Activated CD4-positive, alpha-beta T cell treated with anti-CD3 and anti-CD28 coated beads, Interleukin-2, amount 10 ng/mL, durations not matched to agents 7 days and 5 days (primary cell): ENCODE measurements at regions of chr16 and their contacts with region 1.

Region 1: DNA sequence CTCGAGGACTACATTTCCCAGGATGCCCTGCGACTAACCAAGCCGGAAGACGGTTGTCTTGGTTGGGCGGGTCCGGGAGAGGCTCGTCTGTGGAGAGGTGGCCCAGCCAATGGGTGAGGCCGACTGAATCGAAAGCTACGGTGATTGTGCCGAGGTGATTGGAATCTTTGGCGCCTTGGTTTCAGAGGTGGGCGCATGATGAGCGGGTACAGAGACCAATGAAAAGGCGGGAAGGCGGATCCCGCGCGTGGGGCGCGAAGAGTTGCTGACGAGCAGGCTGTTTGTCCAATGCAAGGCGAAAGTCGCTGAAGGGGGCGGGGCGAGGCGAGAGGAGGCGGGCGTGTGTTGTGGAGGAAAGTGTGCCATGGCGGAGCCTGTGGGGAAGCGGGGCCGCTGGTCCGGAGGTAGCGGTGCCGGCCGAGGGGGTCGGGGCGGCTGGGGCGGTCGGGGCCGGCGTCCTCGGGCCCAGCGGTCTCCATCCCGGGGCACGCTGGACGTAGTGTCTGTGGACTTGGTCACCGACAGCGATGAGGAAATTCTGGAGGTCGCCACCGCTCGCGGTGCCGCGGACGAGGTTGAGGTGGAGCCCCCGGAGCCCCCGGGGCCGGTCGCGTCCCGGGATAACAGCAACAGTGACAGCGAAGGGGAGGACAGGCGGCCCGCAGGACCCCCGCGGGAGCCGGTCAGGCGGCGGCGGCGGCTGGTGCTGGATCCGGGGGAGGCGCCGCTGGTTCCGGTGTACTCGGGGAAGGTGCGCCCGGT is at the start of gene NFATC2IP:
- DNase-seq: peak; percentile 100
- H3K4me3 Mint-ChIP-seq: peak within 1 kb of the TSS; percentile 100
- H3K27ac Mint-ChIP-seq: peak within 1 kb of the TSS; percentile 99
- H3K4me1 Mint-ChIP-seq: peaks cover 36% of the 10 kb centered on the region
- H3K27me3 Mint-ChIP-seq: peaks cover 3% of the 10 kb centered on the region
- total RNA-seq, gene NFATC2IP: 114 to 130 TPM

Region 2: GRCh38 chr16:28846080-28846932 is 104.5 kb before region 1 on chr16 and contains the start of gene TUFM:
- CTCF ChIA-PET with region 1: interaction called, 12 read pairs
- POLR2A ChIA-PET with region 1: interaction called, 3 read pairs
- DNase-seq: peak; percentile 99
- H3K4me3 Mint-ChIP-seq: peak within 1 kb of the TSS; percentile 90
- H3K27ac Mint-ChIP-seq: peak within 1 kb of the TSS; percentile 93
- H3K4me1 Mint-ChIP-seq: peaks cover 35% of the 10 kb centered on the region
- H3K27me3 Mint-ChIP-seq: no peaks in the 10 kb centered on the region
- total RNA-seq, gene TUFM: 105 to 125 TPM

Region 3: GRCh38 chr16:28863929-28864793 is 86.7 kb before region 1 on chr16:
- CTCF ChIA-PET with region 1: interaction called, 13 read pairs
- POLR2A ChIA-PET with region 1: no interaction called
- DNase-seq: peak; percentile 24
- H3K4me3 Mint-ChIP-seq: peak overlapping the region; percentile 86
- H3K27ac Mint-ChIP-seq: peak overlapping the region; percentile 98
- H3K4me1 Mint-ChIP-seq: peaks cover 33% of the 10 kb centered on the region
- H3K27me3 Mint-ChIP-seq: no peaks in the 10 kb centered on the region

Region 4: GRCh38 chr16:28873536-28874201 is 77.2 kb before region 1 on chr16:
- CTCF ChIA-PET with region 1: interaction called, 13 read pairs
- POLR2A ChIA-PET with region 1: interaction called, 9 read pairs
- DNase-seq: peak; percentile 62
- H3K4me3 Mint-ChIP-seq: no peak overlapping the region
- H3K27ac Mint-ChIP-seq: no peak overlapping the region
- H3K4me1 Mint-ChIP-seq: peaks cover 9% of the 10 kb centered on the region
- H3K27me3 Mint-ChIP-seq: no peaks in the 10 kb centered on the region

Region 5: DNA sequence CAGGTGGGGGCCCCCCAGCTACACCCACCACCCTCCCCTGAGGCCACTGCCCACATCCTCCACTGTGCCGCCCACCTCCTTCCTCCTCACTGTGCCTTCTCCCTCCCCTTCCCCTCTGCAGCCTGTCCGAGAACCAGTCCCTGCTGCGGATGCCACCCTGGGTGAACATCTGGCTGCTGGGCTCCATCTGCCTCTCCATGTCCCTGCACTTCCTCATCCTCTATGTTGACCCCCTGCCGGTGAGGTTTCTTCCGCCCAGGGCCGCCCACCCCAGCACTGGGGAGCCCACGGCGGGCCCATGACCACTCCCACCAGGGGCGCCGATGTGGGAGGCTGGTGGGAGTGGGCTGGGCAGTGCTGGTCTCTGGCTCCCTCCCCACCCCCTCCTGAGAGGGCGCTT is 47.9 kb before region 1 on chr16:
- CTCF ChIA-PET with region 1: no interaction called
- POLR2A ChIA-PET with region 1: no interaction called
- DNase-seq: no peak
- H3K4me3 Mint-ChIP-seq: no peak overlapping the region
- H3K27ac Mint-ChIP-seq: no peak overlapping the region
- H3K4me1 Mint-ChIP-seq: peaks cover 4% of the 10 kb centered on the region
- H3K27me3 Mint-ChIP-seq: no peaks in the 10 kb centered on the region

Region 6: GRCh38 chr16:28935924-28936783 is 14.7 kb before region 1 on chr16:
- CTCF ChIA-PET with region 1: interaction called, 30 read pairs
- POLR2A ChIA-PET with region 1: no interaction called
- DNase-seq: peak; percentile 86
- H3K4me3 Mint-ChIP-seq: peak overlapping the region; percentile 60
- H3K27ac Mint-ChIP-seq: peak overlapping the region; percentile 48
- H3K4me1 Mint-ChIP-seq: peaks cover 25% of the 10 kb centered on the region
- H3K27me3 Mint-ChIP-seq: no peaks in the 10 kb centered on the region

Region 7: DNA sequence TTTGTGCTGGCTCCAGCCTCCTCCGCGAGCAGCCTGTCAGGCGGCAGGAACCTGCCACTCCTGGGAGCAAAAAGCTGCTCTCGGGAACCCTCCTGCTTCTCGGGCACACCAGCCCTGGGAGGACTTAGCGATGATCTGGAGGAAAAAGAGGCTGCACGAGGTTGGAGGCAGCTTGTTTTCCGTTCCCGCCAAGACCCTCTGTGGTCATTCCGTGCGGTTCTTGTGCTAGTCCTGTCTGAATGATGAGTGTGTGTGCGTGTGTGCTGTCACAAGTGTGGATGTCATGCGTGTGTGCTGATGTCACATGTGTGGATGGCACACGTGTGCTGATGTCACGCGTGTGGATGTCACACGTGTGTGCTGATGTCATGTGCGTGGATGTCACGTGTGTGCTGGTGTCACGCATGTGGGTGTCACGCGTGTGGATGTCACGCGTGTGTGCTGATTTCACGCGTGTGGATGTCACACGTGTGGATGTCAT is 305.7 kb after region 1 on chr16:
- CTCF ChIA-PET with region 1: no interaction called
- POLR2A ChIA-PET with region 1: no interaction called
- DNase-seq: no peak
- H3K4me3 Mint-ChIP-seq: no peak overlapping the region
- H3K27ac Mint-ChIP-seq: no peak overlapping the region
- H3K4me1 Mint-ChIP-seq: peaks cover 9% of the 10 kb centered on the region
- H3K27me3 Mint-ChIP-seq: no peaks in the 10 kb centered on the region